A549 (cell line): ENCODE measurements at regions of chr15 and their contacts with region 1.

Region 1: GRCh38 chr15:92881802-92882696 is 18.1 kb upstream of the CHD2 start:
- DNase-seq: peak; percentile 99 to 100
- ATAC-seq: peak; percentile 95
- H3K4me3 ChIP-seq: peak overlapping the region; percentile 34
- H3K27ac ChIP-seq: peak overlapping the region; percentile 86 to 99
- H3K4me1 ChIP-seq: peaks cover 36% of the 10 kb centered on the region
- CTCF ChIP-seq: no peak
- EP300 ChIP-seq: no peak
- POLR2A ChIP-seq: peak; percentile 85
- RAD21 ChIP-seq: no peak

Region 2: DNA sequence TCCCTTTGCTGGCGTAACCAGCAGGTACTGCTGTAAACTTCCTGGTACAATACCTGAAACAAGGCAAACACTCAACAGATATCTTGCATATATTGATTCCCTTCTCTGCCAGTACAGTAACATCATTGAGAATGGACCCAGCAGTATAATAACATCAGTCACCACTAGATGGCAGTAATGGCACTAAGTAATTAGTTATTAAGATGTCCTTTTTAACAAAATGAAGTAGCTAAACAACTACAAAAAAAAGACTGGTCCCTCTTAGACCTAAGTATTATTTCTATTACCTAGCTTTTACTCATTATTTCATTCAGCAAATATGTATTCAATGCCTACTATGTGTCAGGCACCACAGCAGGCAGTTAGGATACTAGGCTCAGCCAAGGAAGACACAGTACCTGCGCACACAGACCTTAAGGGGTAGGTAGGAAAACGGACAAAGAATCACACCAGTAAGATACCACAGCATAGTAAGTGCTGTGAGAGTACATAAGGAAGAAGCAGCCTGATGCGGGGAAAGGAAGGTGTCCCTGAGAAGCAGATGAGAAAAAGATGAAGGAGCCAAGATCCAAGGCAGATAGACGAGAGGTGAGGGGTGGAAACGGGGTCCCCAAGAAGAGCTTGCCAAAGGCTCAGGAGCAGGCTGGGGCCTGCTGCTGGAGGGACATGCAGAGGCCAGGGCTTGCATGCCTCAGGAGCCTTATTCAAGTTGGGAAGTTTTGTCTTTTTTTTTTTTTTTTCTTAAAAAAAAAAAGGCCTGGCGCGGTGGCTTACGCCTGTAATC is 84.7 kb before region 1 on chr15:
- CTCF ChIA-PET with region 1: interaction called, 8 read pairs
- POLR2A ChIA-PET with region 1: interaction called, 15 read pairs
- DNase-seq: peak; percentile 79 to 84
- ATAC-seq: peak; percentile 78 to 81
- H3K4me3 ChIP-seq: no peak overlapping the region
- H3K27ac ChIP-seq: peak overlapping the region; percentile 77 to 81
- H3K4me1 ChIP-seq: peaks cover 25% of the 10 kb centered on the region
- CTCF ChIP-seq: peak; percentile 96
- EP300 ChIP-seq: no peak
- POLR2A ChIP-seq: no peak
- RAD21 ChIP-seq: peak; percentile 88 to 91

Region 3: DNA sequence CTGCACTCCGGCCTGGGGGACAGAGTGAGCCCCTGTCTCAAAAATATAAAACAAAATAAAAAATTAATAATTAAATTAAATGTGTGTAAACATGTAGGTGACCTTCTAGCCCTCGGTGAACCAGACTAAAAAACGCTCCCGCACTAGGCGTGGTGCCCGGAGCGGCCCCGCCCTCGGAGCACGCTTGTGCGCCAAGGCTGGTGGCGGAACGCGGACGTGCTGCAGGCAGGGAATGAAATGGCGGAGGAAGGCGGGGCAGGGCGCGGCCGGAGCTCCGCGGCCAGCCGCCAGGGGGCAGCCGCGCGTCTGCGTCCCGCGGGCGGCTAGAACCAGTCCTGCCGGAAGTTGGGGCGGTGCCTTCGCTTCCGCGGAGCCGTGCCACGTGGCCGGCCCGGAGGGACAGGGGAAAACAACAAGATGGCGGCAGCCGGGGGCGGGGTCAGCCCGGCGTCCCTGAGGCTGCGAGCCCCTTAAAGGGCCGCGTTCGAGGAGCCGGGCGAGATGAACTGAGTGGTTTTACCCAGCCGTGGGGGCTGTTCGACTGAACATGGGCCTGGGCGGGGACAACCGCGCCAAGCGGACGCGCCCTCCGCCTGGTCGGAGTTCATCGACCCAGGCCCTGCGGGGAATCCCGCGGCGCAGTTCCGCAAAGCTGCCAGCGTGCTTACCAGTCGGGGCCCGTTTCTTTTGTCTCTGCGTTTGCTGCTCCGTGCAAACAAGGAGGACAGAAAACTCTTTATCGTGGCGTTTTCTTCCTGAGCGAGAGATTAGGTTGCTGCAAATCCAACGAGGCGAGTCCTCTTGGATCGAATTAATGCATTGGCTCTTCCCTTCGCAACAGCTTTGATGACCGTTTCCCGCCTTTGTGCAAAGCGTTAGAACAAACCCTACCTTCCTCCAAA is 72.8 kb before region 1 on chr15:
- CTCF ChIA-PET with region 1: interaction called, 168 read pairs
- POLR2A ChIA-PET with region 1: interaction called, 359 read pairs
- DNase-seq: peak; percentile 97 to 99
- ATAC-seq: peak; percentile 75 to 81
- H3K4me3 ChIP-seq: peak overlapping the region; percentile 41
- H3K27ac ChIP-seq: peak overlapping the region; percentile 95 to 97
- H3K4me1 ChIP-seq: peaks cover 37% of the 10 kb centered on the region
- CTCF ChIP-seq: peak; percentile 99
- EP300 ChIP-seq: peak in 1 of 2 experiments; percentile 28; a peak in 2 of 5 replicates
- POLR2A ChIP-seq: peak; percentile 81
- RAD21 ChIP-seq: peak; percentile 87 to 99; a peak in 4 of 5 replicates

Region 4: DNA sequence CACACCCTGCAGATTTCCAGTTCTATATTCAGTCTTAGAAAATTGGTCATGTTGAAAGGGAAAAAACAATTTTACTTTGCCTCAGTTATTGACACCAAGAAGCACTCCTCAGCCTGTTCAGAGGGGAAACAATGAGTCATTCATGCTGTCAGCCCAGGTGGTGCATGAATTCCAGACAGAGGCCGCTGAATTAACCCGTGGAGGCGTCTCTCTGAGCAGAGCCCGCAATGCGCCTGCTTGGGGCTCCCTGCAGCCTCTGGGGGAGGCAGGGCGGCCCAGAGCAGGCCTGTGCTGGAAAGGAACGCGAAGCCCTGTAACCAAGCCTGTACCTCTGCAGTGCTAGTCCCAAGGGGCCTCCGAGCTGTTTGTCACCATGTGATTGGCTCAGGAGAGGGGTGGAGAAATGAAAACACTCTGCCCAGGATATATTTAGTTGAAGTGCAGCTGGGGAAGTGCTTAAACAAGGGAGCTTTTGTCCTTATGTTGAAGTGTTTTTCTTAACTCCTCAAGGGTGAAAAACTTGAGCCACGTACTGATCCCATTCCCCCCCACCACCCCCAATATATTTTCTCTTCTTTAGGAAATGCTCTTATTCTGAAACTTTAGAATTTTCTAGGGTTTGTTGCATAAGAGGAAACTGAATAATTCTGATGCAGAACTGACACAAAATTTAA is 50.3 kb before region 1 on chr15:
- CTCF ChIA-PET with region 1: interaction called, 3 read pairs
- POLR2A ChIA-PET with region 1: interaction called, 164 read pairs
- DNase-seq: peak; percentile 95
- ATAC-seq: peak; percentile 100
- H3K4me3 ChIP-seq: peak overlapping the region; percentile 12; the same call in 2 of the 3 replicates
- H3K27ac ChIP-seq: peak overlapping the region; percentile 75 to 83
- H3K4me1 ChIP-seq: peaks cover 29% of the 10 kb centered on the region
- CTCF ChIP-seq: no peak
- EP300 ChIP-seq: no peak
- POLR2A ChIP-seq: peak; percentile 60
- RAD21 ChIP-seq: peak in 1 of 2 experiments; percentile 28; a peak in 2 of 5 replicates

Region 5: DNA sequence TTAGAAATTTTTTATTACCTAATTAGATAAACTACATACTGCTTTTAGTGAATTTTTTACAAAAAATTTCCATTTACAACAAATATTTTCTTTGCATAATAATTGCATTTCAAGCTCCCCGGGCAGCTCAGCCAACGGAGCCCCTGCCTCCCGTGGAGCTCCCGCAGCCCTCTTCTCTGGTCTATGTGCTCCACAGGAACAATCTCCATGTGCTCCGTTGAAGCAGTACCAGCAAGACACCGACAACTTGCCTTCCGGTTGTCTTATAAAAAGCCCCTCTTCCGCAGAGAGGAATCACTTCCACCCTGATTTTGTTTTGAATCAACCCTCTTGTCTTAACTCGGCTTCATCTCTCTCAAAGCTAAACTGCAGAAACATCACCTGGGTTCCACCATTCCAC is 28.8 kb before region 1 on chr15:
- CTCF ChIA-PET with region 1: interaction called, 3 read pairs
- POLR2A ChIA-PET with region 1: interaction called, 17 read pairs
- DNase-seq: no peak
- ATAC-seq: no peak
- H3K4me3 ChIP-seq: no peak overlapping the region
- H3K27ac ChIP-seq: no peak overlapping the region
- H3K4me1 ChIP-seq: peaks cover 13% of the 10 kb centered on the region
- CTCF ChIP-seq: no peak
- EP300 ChIP-seq: no peak
- POLR2A ChIP-seq: no peak
- RAD21 ChIP-seq: no peak

Region 6: DNA sequence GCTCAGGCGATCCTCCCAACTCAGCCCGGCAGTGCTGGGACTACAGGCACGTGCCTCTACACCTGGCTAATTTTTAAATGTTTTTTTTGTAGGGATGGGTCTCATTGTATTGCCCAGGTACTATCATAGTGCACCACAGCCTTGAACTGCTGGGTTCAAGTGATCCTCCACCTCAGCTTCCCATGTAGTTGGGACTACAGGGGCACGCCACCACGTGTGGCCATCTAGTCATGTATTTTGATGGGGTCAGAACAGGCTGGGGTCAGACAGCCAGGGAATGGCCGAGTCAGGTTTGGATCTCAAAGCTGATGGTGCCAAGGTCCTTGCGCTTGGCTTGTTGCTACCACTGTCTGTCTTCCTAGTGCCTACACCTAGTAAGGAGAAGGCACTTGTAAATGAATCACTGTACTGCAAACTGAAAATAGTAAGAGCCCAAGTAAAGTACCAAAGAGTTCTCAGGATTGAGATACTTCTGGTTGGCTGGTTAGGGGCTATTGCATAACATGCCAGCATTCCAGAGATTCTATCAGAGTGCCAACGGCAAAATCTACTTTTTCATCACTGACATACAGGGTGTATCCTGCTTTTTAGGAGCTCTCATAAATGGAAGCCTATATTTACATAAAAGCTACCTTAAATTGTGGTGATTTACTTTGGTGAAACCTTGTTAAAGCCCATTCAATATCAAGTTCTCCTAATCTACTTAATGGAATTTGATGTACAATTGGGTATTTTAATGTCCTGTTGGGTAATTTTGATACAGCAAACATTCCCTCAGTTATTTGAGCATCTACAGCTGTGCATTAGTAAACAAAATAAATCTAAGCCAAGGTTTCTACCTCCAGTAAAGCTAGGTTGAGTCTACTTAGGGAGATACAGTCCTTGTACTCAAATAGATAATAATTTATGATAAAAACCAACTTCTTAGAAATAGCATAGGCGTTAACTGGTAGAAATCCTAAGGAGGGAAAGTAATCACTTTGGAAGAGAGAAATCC is 12.8 kb before region 1 on chr15:
- CTCF ChIA-PET with region 1: interaction called, 49 read pairs
- POLR2A ChIA-PET with region 1: interaction called, 134 read pairs
- DNase-seq: peak in 1 of 2 experiments; percentile 84
- ATAC-seq: peak; percentile 82 to 84
- H3K4me3 ChIP-seq: peak overlapping the region; percentile 13; the same call in 1 of the 3 replicates
- H3K27ac ChIP-seq: peak overlapping the region; percentile 84 to 90
- H3K4me1 ChIP-seq: peaks cover 40% of the 10 kb centered on the region
- CTCF ChIP-seq: no peak
- EP300 ChIP-seq: peak in 1 of 2 experiments; percentile 66; a peak in 1 of 5 replicates
- POLR2A ChIP-seq: no peak
- RAD21 ChIP-seq: 0 out of 5 replicates have a peak, but pooled peaks of 1 of the 2 experiments have one; percentile 21

Region 7: GRCh38 chr15:92903941-92904831 is 22.1 kb after region 1 on chr15:
- CTCF ChIA-PET with region 1: interaction called, 7 read pairs
- POLR2A ChIA-PET with region 1: interaction called, 374 read pairs
- DNase-seq: peak; percentile 88 to 99
- ATAC-seq: peak; percentile 81 to 90
- H3K4me3 ChIP-seq: peak overlapping the region; percentile 57
- H3K27ac ChIP-seq: peak overlapping the region; percentile 94 to 95
- H3K4me1 ChIP-seq: peaks cover 41% of the 10 kb centered on the region
- CTCF ChIP-seq: no peak
- EP300 ChIP-seq: peak; percentile 52 to 70; a peak in 2 of 5 replicates
- POLR2A ChIP-seq: peak; percentile 70
- RAD21 ChIP-seq: peak in 1 of 2 experiments; percentile 38; a peak in 2 of 5 replicates

Region 8: DNA sequence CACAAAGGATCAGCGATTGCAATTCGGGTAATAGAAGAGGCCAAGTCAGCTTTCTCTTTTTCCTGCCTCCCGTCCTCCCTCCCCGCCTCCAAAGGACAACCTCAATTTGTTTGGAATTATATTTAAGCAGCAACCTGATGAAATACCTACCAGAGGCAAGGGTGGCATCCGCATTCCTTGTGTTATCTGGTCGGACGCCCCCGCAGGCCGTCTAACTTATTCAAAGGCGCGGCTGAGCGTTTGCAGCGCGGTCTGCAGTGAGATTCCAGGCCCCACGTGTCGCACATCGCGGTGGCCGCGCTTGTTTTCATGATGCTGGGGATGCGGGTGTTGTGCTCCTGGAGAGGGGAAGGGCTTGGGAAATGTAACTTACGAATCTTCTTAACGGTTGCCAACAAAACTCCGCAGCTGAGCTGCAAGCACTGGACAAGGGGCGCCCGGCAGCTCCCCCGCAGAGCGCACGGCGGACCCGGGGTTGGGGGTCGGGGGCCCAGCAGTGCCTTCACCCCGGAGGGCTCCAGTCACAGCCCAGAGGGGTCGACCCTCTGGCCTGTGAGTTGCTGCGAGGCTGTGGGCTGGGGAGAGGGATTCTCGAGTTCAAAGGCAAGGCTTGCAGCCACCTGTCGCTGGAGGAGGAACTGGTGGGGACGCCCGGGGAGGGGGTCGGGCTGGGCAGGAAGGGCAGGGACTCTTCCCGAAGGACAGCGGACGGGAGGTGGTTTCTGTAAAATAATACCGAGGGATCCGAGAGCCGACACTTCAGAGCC is 227.5 kb after region 1 on chr15:
- CTCF ChIA-PET with region 1: no interaction called
- POLR2A ChIA-PET with region 1: no interaction called
- DNase-seq: no peak
- ATAC-seq: no peak
- H3K4me3 ChIP-seq: no peak overlapping the region
- H3K27ac ChIP-seq: no peak overlapping the region
- H3K4me1 ChIP-seq: no peaks in the 10 kb centered on the region
- CTCF ChIP-seq: no peak
- EP300 ChIP-seq: no peak
- POLR2A ChIP-seq: no peak
- RAD21 ChIP-seq: no peak